Right ventricle myocardium inferior (tissue), 1 donor: ENCODE measurements at regions of chr11 and their contacts with region 1.

Region 1: DNA sequence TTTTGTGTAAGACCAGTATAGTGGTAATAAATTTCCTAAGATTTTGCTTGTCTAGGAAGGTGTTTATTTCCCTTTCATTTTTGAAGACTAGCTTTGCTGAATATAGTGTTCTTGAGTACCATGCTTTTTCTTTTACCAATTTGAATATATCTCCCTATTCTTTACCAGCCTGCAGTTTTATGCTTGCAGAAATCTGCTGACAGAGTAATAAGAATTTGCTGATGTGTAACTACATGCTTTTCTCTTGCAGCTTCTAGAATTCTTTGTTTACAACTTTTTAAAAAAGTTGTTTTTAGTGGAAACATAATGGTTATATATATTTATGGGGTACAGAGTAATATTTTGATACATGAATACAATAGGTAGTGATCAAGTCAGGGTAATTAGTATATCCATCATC is 324.8 kb upstream of the FOLH1 start:
- DNase-seq: no peak
- ATAC-seq: no peak

Region 2: GRCh38 chr11:47858169-47858543 is 1675.0 kb before region 1 on chr11:
- intact Hi-C with region 1: no loop called
- DNase-seq: no peak
- ATAC-seq: no peak

Region 3: DNA sequence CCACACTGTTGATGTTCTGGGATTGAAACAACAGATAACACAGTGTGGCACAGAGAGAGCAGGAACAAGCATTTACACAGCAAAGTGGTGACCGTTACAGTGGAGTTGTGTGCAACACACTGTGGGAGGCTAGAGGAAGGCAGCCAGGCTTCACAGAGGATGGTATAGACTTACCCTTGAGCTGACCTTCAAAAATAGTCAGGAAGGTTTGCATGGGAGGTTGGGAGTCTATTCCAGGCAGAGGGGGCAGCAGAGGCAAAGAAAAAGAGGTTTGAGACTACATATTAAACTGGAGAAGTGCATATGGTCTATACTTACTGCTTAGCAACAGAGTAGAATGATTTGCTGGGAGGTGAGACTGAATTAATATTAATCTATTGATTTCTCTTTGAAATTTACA is 302.7 kb before region 1 on chr11:
- intact Hi-C with region 1: loop called (anchors 5 kb)
- DNase-seq: no peak
- ATAC-seq: no peak

Region 4: GRCh38 chr11:49505231-49505630 is 28.0 kb before region 1 on chr11:
- intact Hi-C with region 1: no loop called
- DNase-seq: no peak
- ATAC-seq: no peak